CD14-positive monocyte (primary cell): ENCODE measurements at regions of chr9 and their contacts with region 1.

Region 1: GRCh38 chr9:113581865-113582697 is 118.6 kb downstream of the RGS3 start:
- DNase-seq: peak; percentile 84 to 85 (median 85)
- H3K4me3 ChIP-seq: peak overlapping the region; percentile 43 to 81 (median 63)
- H3K4me3 Mint-ChIP-seq: peak overlapping the region; percentile 71 to 92
- H3K27ac ChIP-seq: peak overlapping the region; percentile 89 to 94
- H3K27ac Mint-ChIP-seq: peak overlapping the region; percentile 94 to 99 (median 97)
- H3K4me1 ChIP-seq: peaks cover 94 to 99% of the 10 kb centered on the region in 2 donors
- H3K4me1 Mint-ChIP-seq: peaks cover 93% of the 10 kb centered on the region
- H3K27me3 ChIP-seq: no peaks in the 10 kb centered on the region
- H3K27me3 Mint-ChIP-seq: peaks cover 0 to 2% (median 0%) of the 10 kb centered on the region in 3 donors
- CTCF ChIP-seq: peak; percentile 64

Region 2: GRCh38 chr9:112479221-112479620 is 1102.9 kb before region 1 on chr9:
- intact Hi-C with region 1: no loop called
- DNase-seq: no peak
- H3K4me3 ChIP-seq: no peak overlapping the region
- H3K4me3 Mint-ChIP-seq: no peak overlapping the region
- H3K27ac ChIP-seq: no peak overlapping the region
- H3K27ac Mint-ChIP-seq: no peak overlapping the region
- H3K4me1 ChIP-seq: no peaks in the 10 kb centered on the region
- H3K4me1 Mint-ChIP-seq: no peaks in the 10 kb centered on the region
- H3K27me3 ChIP-seq: no peaks in the 10 kb centered on the region
- H3K27me3 Mint-ChIP-seq: peaks cover 0 to 2% (median 0%) of the 10 kb centered on the region in 3 donors
- CTCF ChIP-seq: no peak

Region 3: GRCh38 chr9:113410207-113410864 is 171.7 kb before region 1 on chr9 and contains the starts of genes C9orf43 and POLE3:
- intact Hi-C with region 1: loop called (anchors 5 kb)
- DNase-seq: peak; percentile 92 to 93 (median 92)
- H3K4me3 ChIP-seq: peak within 1 kb of the TSS; percentile 77 to 93 (median 88)
- H3K4me3 Mint-ChIP-seq: peak within 1 kb of the TSS; percentile 97 to 98
- H3K27ac ChIP-seq: peak within 1 kb of the TSS; percentile 92 to 93
- H3K27ac Mint-ChIP-seq: peak within 1 kb of the TSS; percentile 99 to 100 (median 100)
- H3K4me1 ChIP-seq: peaks cover 21 to 22% of the 10 kb centered on the region in 2 donors
- H3K4me1 Mint-ChIP-seq: peaks cover 21% of the 10 kb centered on the region
- H3K27me3 ChIP-seq: no peaks in the 10 kb centered on the region
- H3K27me3 Mint-ChIP-seq: no peaks in the 10 kb centered on the region
- CTCF ChIP-seq: no peak
- polyA plus RNA-seq, gene C9orf43: 0.17 TPM in 1 of 3 donors, not detected in the others
- polyA plus RNA-seq, gene POLE3: 36.1 to 113 (median 92.1) TPM

Region 4: DNA sequence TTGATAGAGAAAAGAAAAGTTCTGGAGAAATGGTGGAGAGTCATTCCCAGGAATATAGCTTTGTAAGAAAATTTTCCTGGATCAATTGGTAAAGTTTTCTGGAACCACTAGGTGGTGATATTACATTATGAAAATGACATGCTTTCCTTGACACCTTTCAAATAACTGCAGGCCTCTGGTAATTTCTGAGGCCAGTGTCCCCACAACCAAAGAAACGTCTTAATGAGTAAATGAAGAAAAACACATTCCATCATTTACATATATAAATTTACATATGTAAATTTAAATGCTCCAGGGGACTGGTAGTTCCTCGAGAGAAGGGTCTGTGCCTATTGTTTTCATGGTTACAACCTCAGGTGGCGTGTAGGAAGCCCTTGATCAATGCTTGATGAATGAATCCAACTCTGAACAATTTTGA is 135.7 kb before region 1 on chr9:
- intact Hi-C with region 1: loop called (anchors 5 to 10 kb)
- DNase-seq: peak in 2 of 3 donors; percentile 25 to 52
- H3K4me3 ChIP-seq: no peak overlapping the region
- H3K4me3 Mint-ChIP-seq: no peak overlapping the region
- H3K27ac ChIP-seq: no peak overlapping the region
- H3K27ac Mint-ChIP-seq: no peak overlapping the region
- H3K4me1 ChIP-seq: no peaks in the 10 kb centered on the region
- H3K4me1 Mint-ChIP-seq: no peaks in the 10 kb centered on the region
- H3K27me3 ChIP-seq: no peaks in the 10 kb centered on the region
- H3K27me3 Mint-ChIP-seq: no peaks in the 10 kb centered on the region
- CTCF ChIP-seq: peak; percentile 87

Region 5: DNA sequence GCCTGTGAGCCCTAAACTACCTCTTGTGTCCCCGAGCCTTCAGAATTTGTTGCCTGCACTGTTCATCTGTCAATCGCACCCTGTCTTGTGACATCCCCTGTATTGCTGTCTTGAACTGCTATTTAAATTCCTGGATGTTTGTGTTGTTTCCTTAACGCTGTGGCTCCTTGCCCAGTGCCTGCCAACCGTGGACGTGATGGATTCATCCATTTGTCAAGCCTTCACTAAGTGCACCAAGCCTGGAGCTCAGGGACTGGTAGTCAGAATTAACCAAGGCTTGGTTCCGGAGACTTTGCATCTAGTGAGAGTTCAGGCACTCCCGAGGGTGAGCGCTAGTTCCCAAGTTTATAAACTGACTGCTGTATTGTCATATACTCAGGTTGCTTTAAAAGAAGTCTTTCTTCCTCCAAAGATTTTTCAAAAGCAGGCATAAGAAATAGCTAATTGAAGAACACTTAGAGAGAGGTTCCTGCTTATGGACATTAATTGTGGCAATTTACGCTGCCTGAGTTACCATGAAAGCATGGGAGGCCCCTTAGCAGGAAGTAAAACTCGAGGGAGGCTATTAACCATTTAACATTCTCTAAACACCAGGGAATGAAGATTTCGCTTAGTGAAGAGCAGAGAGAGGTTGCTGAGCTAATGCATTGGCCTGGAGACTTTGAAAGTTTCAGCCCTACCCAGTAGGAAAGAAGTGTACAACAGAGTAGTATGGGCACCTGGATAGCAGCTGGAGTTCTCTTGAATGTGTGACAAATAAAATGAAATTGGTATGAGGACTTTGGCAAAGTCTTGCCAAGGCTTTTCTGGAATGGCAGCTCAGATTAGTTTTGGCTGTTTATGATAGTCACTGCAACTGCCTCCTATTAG is 89.5 kb before region 1 on chr9:
- intact Hi-C with region 1: no loop called
- DNase-seq: no peak
- H3K4me3 ChIP-seq: no peak overlapping the region
- H3K4me3 Mint-ChIP-seq: no peak overlapping the region
- H3K27ac ChIP-seq: no peak overlapping the region
- H3K27ac Mint-ChIP-seq: no peak overlapping the region
- H3K4me1 ChIP-seq: peaks cover 3 to 10% of the 10 kb centered on the region in 2 donors
- H3K4me1 Mint-ChIP-seq: peaks cover 11% of the 10 kb centered on the region
- H3K27me3 ChIP-seq: no peaks in the 10 kb centered on the region
- H3K27me3 Mint-ChIP-seq: no peaks in the 10 kb centered on the region
- CTCF ChIP-seq: no peak

Region 6: DNA sequence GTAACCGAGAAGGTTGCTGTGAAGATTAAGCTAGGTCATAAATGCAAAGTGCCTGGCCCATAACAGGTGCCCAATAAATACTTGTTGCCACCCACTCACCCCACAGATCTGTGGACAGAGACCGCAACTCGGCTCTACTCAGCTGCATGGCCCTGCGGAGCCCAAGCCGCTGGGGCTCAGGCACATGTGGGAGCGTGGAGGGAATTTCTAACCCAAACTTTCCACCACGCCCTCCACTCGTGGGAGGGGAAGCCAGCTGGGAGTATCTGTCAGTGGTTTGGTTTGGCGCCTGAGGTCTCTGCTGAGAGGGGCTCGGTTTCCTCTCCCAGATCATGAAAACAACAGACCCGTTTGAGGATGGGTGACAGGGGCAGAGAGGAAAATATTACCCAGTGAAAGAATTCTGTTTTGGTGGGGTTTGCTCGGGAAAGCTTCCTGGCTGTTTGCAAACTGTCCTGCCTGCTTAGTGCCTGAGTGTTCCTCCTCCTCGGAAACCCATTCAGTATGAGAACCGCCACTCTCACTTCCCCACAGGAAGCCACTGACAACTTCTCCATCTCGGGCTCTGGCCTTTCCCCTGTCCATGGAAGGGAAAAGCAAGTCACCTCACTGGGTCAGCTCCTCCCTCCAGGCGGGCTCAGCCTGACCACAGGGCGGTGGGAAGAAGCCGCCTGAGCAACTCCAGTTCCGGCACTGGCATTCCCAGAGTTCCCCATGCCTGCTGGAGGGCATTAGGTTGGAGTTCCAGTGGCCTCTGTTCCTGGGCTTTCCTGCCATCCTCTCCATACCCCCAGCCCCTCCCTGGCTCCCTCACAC is 58.5 kb before region 1 on chr9:
- intact Hi-C with region 1: loop called in 1 of 2 experiments (anchors 10 kb)
- DNase-seq: peak; percentile 69 to 88 (median 78)
- H3K4me3 ChIP-seq: peak overlapping the region; percentile 8 to 74 (median 34)
- H3K4me3 Mint-ChIP-seq: peak overlapping the region; percentile 79 to 91
- H3K27ac ChIP-seq: peak overlapping the region; percentile 68 to 77
- H3K27ac Mint-ChIP-seq: peak overlapping the region; percentile 77 to 91 (median 83)
- H3K4me1 ChIP-seq: peaks cover 31 to 32% of the 10 kb centered on the region in 2 donors
- H3K4me1 Mint-ChIP-seq: peaks cover 33% of the 10 kb centered on the region
- H3K27me3 ChIP-seq: no peaks in the 10 kb centered on the region
- H3K27me3 Mint-ChIP-seq: peaks cover 0 to 2% (median 2%) of the 10 kb centered on the region in 3 donors
- CTCF ChIP-seq: no peak